ENCODE measurements at regions of chr5 and their contacts with region 1.

Region 1: DNA sequence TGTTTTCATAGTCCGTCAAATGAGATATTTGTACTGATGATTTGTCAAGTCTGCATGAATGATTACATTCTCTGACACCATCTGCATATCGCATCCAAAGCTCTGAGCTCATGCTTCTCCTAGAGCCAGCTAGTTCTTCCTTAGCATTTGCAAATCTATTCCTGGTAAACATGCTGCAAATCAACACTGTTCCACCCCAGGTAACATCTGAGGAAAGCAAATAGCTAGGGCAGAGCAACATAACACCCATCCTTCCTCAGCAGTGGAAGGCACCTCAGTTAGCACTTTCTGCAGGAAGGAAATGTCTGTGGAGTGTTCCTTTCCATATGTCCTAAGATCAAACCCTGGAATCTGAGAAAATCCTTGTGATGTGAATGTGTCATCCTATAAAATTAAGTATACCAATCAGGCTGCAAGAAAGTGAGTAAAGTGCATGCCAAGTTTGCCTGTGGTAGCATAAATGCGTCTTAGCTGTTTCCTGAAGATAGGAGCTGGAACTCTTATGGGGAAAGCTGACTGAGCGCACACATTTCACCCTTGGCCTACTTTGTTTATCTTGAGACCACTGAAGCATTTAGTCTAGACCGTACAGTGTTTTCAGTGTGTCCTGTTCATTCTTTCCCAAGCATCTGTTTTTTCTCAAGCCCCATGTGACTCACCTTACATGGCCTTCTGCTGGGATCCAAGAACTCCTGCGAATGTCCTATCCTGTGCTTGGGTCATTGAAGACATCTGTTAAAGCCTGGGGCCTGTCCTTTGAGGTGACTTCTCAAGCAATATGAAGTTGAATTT is 50.9 kb upstream of the STARD4 start:
- DNase-seq: peak; percentile 100
- H3K4me3 ChIP-seq: peak overlapping the region in 1 of 3 experiments; percentile 0
- H3K27ac ChIP-seq: peak overlapping the region; percentile 99
- H3K4me1 ChIP-seq: peaks cover 50% of the 10 kb centered on the region
- H3K27me3 ChIP-seq: no peaks in the 10 kb centered on the region
- CTCF ChIP-seq: no peak
- POLR2A ChIP-seq: peak; percentile 89

Region 2: DNA sequence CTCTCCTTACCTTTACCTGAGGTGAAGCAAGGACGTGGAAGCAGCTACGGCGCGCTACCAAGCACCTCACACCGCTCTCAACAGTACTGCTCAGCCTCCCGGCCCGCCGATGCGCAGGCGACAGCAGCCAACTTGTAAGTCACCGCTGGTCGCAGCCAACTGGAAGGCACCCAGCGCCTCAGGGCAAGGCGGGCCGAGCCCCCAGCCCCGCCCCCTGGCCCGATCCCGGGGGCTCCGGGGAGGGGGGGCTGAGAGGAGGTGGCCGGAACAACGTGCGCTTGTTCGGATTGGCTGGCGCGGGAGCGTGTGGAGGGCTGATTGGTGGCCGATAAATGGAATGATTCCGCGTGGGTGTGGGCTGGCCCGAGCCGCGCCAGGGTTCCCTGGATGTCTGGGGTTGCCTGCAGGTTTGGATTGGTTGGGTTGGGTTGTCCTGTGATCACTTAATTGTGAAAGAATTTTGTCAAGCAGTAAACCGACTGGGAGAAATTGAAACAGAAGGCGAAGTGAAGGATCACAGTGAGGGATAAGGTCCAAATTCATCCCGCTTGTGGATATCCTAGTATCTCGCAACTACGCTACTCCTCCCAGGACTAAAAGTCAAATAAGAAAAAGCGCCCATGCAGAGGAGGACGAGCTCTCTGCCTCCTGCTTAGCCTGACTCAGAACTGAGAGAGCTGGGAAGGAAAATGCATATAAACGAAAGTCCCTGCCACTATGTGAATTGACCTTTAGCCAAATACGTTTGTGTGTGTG is 50.7 kb before region 1 on chr5 and contains the start of gene STARD4:
- CTCF ChIA-PET with region 1: interaction called, 3 read pairs
- POLR2A ChIA-PET with region 1: no interaction called
- dilution Hi-C with region 1: no loop called
- intact Hi-C with region 1: loop called (anchors 1 kb)
- DNase-seq: peak; percentile 97
- H3K4me3 ChIP-seq: peak within 1 kb of the TSS; percentile 72 to 97 (median 81)
- H3K27ac ChIP-seq: peak within 1 kb of the TSS; percentile 95
- H3K4me1 ChIP-seq: peaks cover 30% of the 10 kb centered on the region
- H3K27me3 ChIP-seq: no peaks in the 10 kb centered on the region
- CTCF ChIP-seq: no peak
- POLR2A ChIP-seq: peak; percentile 61
- total RNA-seq, gene STARD4: 77.1 and 87.8 TPM in 2 replicates

Region 3: GRCh38 chr5:111584651-111585050 is 21.4 kb after region 1 on chr5:
- CTCF ChIA-PET with region 1: interaction called, 4 read pairs
- POLR2A ChIA-PET with region 1: interaction called, 4 read pairs
- dilution Hi-C with region 1: no loop called
- intact Hi-C with region 1: loop called (anchors 1 kb)
- DNase-seq: peak; percentile 90
- H3K4me3 ChIP-seq: no peak overlapping the region
- H3K27ac ChIP-seq: peak overlapping the region; percentile 66
- H3K4me1 ChIP-seq: peaks cover 29% of the 10 kb centered on the region
- H3K27me3 ChIP-seq: no peaks in the 10 kb centered on the region
- CTCF ChIP-seq: no peak
- POLR2A ChIP-seq: no peak

Region 4: DNA sequence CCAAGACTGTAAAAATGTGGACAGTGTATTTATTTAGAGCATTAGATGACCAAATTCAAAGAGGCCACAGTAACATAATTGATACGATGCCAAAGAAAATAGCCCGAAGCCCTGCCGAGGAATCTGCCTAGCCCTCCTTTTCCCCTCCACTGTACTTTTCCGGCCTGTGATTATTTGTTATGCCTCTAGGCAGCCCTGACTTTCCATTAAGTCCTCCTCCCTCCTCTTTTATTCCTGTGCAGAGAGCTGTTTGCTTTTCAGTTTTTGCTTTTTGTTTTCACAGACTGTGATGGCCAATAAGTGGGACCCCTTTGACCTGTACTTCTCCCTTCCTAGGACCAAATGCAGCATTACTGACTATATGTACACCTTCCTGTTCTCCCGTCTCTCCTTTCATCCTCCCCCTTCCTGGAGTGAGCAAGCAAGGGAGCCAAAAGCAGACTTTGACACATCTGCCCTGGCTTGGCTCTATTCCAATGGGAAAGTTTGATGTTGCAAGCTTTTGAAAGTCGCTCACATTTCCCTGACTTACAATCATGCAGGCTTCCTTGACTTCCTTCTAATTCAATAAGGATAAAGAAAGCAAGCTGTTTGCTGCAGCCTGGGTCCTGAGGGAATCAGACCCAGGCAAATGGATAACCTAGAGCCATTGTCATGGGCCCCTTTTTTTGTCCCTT is 117.6 kb after region 1 on chr5:
- CTCF ChIA-PET with region 1: interaction called, 6 read pairs
- POLR2A ChIA-PET with region 1: interaction called, 6 read pairs
- dilution Hi-C with region 1: no loop called
- intact Hi-C with region 1: loop called (anchors 1 kb)
- DNase-seq: peak; percentile 99
- H3K4me3 ChIP-seq: peak overlapping the region in 1 of 3 experiments; percentile 13
- H3K27ac ChIP-seq: peak overlapping the region; percentile 94
- H3K4me1 ChIP-seq: peaks cover 27% of the 10 kb centered on the region
- H3K27me3 ChIP-seq: no peaks in the 10 kb centered on the region
- CTCF ChIP-seq: no peak
- POLR2A ChIP-seq: no peak

Region 5: GRCh38 chr5:111697881-111698757 is 134.9 kb after region 1 on chr5:
- CTCF ChIA-PET with region 1: interaction called, 15 read pairs
- POLR2A ChIA-PET with region 1: no interaction called
- dilution Hi-C with region 1: no loop called
- intact Hi-C with region 1: loop called (anchors 1 kb)
- DNase-seq: peak; percentile 88
- H3K4me3 ChIP-seq: no peak overlapping the region
- H3K27ac ChIP-seq: peak overlapping the region; percentile 49
- H3K4me1 ChIP-seq: peaks cover 12% of the 10 kb centered on the region
- H3K27me3 ChIP-seq: no peaks in the 10 kb centered on the region
- CTCF ChIP-seq: peak; percentile 57 to 59
- POLR2A ChIP-seq: no peak

Region 6: GRCh38 chr5:111748304-111748763 is 185.1 kb after region 1 on chr5:
- CTCF ChIA-PET with region 1: no interaction called
- POLR2A ChIA-PET with region 1: no interaction called
- dilution Hi-C with region 1: no loop called
- intact Hi-C with region 1: loop called (anchors 1 kb)
- DNase-seq: peak; percentile 95
- H3K4me3 ChIP-seq: peak overlapping the region in 1 of 3 experiments; percentile 29
- H3K27ac ChIP-seq: peak overlapping the region; percentile 71
- H3K4me1 ChIP-seq: peaks cover 26% of the 10 kb centered on the region
- H3K27me3 ChIP-seq: no peaks in the 10 kb centered on the region
- CTCF ChIP-seq: no peak
- POLR2A ChIP-seq: no peak